Thyroid gland (tissue), 4 donors: ENCODE measurements at regions of chr2 and their contacts with region 1.

Region 1: GRCh38 chr2:48107326-48107925 is 201.1 kb upstream of the FBXO11 start:
- DNase-seq: no peak
- H3K4me3 ChIP-seq: no peak overlapping the region
- H3K27ac ChIP-seq: peak overlapping the region in 1 of 3 donors; percentile 11
- H3K4me1 ChIP-seq: peaks cover 0 to 12% of the 10 kb centered on the region in 2 donors
- H3K27me3 ChIP-seq: no peaks in the 10 kb centered on the region
- CTCF ChIP-seq: no peak
- POLR2A ChIP-seq: no peak

Region 2: DNA sequence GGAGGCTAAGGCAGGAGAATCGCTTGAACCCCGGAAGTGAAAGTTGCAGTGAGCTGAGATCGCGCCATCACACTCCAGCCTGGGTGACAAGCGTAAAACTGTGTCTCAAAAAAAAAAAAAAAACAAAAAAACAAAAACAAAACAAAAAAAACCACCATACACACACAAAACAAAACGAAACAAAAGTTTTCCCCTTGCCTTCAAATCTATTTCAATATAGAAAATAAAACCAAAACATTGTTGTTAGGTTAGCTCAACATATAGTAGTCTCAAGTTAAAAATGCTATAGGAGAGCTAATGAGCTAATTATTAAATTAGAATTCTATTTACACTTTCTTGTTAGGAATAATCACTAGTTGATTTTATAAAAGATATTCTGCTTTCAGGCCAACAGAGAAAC is 244.5 kb before region 1 on chr2:
- intact Hi-C with region 1: loop called (anchors 5 kb)
- DNase-seq: no peak
- H3K4me3 ChIP-seq: no peak overlapping the region
- H3K27ac ChIP-seq: no peak overlapping the region
- H3K4me1 ChIP-seq: peaks cover 23 to 24% of the 10 kb centered on the region in 2 donors
- H3K27me3 ChIP-seq: no peaks in the 10 kb centered on the region
- CTCF ChIP-seq: no peak
- POLR2A ChIP-seq: no peak

Region 3: GRCh38 chr2:47906157-47907038 is 201.0 kb before region 1 on chr2 and contains the start of gene FBXO11:
- intact Hi-C with region 1: loop called (anchors 5 kb)
- DNase-seq: peak; percentile 96 to 97
- H3K4me3 ChIP-seq: peak within 1 kb of the TSS; percentile 56 to 96 (median 93)
- H3K27ac ChIP-seq: peak within 1 kb of the TSS; percentile 99
- H3K4me1 ChIP-seq: peaks cover 14 to 16% of the 10 kb centered on the region in 2 donors
- H3K27me3 ChIP-seq: no peaks in the 10 kb centered on the region
- CTCF ChIP-seq: peak in 5 of 6 experiments; percentile 49 to 73 (median 66)
- POLR2A ChIP-seq: peak; percentile 59 to 90
- total RNA-seq, gene FBXO11: 50.4 to 82.8 (median 60.6) TPM

Region 4: DNA sequence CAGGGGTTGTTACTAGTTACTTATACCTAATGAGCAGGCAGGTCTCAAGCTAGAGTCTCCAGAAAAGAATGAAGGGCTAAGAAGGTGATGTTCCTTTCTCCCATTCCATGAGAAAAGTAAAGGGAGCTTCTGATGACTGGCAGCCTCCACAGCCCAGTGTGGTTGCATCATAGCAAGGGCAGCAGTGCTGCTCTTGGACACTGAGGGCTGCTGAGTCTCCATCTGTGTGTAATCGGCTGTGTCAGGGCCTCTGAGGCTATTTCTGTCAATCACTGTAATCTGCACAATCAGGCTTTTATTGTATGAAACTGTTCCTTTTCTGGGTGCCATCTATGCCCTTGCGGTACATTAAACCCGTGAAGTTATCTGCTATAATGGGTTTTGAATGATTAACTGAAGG is 37.0 kb before region 1 on chr2:
- intact Hi-C with region 1: no loop called
- DNase-seq: no peak
- H3K4me3 ChIP-seq: no peak overlapping the region
- H3K27ac ChIP-seq: no peak overlapping the region
- H3K4me1 ChIP-seq: peaks cover 2 to 3% of the 10 kb centered on the region in 2 donors
- H3K27me3 ChIP-seq: no peaks in the 10 kb centered on the region
- CTCF ChIP-seq: no peak
- POLR2A ChIP-seq: no peak